ENCODE measurements at regions of chr19 and their contacts with region 1.

Region 1: GRCh38 chr19:10565567-10566407 is at the start of gene KRI1:
- DNase-seq: peak; percentile 100
- H3K4me3 Mint-ChIP-seq: peak within 1 kb of the TSS; percentile 99
- H3K27ac Mint-ChIP-seq: peak within 1 kb of the TSS; percentile 96
- H3K4me1 Mint-ChIP-seq: peaks cover 47% of the 10 kb centered on the region
- H3K27me3 Mint-ChIP-seq: peaks cover 3% of the 10 kb centered on the region
- total RNA-seq, gene KRI1: 84.0 and 90.6 TPM in 2 replicates

Region 2: DNA sequence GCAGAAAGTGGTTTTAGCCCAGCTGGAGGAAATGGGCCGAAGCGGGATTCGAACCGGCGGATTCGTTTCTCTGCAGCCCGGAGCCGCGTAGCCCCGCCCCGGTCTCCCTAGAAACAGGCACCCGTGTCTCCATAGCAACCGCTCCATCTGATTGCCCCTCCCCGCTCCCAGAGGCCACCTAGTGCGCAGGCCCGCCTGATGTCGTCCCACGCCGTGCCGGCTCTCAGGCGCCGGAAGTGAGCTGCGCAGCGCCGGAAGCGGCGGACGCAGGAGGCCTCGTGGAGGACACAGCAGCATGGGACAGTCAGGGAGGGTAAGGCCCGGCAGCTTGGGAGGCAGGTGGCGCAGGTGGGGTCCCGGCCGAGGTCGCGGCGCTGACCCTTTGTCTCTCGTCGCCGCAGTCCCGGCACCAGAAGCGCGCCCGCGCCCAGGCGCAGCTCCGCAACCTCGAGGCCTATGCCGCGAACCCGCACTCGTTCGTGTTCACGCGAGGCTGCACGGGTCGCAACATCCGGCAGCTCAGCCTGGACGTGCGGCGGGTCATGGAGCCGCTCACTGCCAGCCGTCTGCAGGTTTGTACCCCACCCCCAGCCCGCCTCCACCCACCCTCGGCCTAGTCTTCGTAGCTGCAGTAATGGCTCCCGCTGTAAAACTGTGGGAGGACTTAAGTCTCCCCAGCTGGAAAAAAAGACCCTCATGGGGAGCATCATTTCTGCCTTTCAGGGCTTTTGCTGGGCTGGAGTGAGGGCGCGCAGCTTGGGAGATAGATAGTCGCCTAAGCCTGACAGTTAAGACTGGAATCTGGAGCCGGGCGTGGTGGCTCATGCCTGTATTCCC is 459.5 kb before region 1 on chr19 and contains the start of gene PPAN:
- intact Hi-C with region 1: loop called (anchors 10 kb)
- DNase-seq: peak; percentile 99
- H3K4me3 Mint-ChIP-seq: peak within 1 kb of the TSS; percentile 85
- H3K27ac Mint-ChIP-seq: peak within 1 kb of the TSS; percentile 100
- H3K4me1 Mint-ChIP-seq: peaks cover 61% of the 10 kb centered on the region
- H3K27me3 Mint-ChIP-seq: peaks cover 1% of the 10 kb centered on the region
- total RNA-seq, gene PPAN: 222 and 232 TPM in 2 replicates

Region 3: DNA sequence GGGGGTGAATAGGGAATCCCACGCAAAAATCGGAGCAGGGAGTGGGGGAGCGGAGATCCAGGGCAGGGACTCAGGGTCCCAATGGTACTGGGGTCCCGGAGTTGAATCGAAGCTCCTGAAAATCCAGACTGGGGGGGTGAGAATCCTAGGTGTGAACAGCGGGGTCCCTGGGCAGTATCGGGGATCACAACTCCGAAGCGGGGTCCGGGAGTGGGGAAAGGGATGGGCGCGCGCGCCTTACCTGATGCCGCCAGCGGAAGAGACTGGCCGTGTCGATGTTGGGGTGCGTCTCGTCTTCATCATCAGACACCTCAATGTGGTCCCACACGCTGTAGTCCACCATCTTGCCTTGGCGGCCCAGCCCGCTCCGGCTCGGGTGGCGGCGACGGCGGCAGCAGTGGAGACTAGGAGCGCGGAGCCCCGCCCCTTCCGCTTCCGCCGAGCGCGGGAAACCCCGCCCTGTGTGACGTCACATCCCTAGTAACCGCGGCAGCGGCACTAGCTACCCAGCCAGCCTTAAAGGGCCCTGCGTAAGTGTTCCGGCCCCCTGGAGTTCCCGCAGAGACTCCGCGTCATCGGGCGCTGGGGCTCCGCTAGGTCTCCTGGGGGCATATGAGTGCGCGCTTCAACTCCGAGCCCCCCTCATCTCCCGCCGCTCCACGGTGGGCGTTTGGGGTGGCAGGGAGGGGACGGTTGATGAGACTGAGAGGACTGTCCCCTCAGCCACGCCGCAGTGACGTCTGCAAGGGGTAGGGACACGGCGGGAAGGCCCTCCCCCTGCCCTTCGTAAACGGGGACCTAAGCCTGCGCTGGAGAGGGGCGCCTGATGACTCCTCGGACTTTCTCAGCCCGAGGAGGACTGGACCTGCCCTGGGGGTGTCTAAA is 162.4 kb before region 1 on chr19 and contains the start of gene CDC37:
- intact Hi-C with region 1: loop called (anchors 5 kb)
- DNase-seq: peak; percentile 100
- H3K4me3 Mint-ChIP-seq: peak within 1 kb of the TSS; percentile 99
- H3K27ac Mint-ChIP-seq: peak within 1 kb of the TSS; percentile 98
- H3K4me1 Mint-ChIP-seq: peaks cover 58% of the 10 kb centered on the region
- H3K27me3 Mint-ChIP-seq: no peaks in the 10 kb centered on the region
- total RNA-seq, gene CDC37: 304 and 310 TPM in 2 replicates

Region 4: GRCh38 chr19:10543420-10544241 is 22.2 kb before region 1 on chr19 and contains the start of gene ATG4D:
- intact Hi-C with region 1: loop called (anchors 2 kb)
- DNase-seq: peak; percentile 93
- H3K4me3 Mint-ChIP-seq: peak within 1 kb of the TSS; percentile 90
- H3K27ac Mint-ChIP-seq: peak within 1 kb of the TSS; percentile 84
- H3K4me1 Mint-ChIP-seq: peaks cover 13% of the 10 kb centered on the region
- H3K27me3 Mint-ChIP-seq: peaks cover 13% of the 10 kb centered on the region
- total RNA-seq, gene ATG4D: 36.7 and 40.8 TPM in 2 replicates

Region 5: DNA sequence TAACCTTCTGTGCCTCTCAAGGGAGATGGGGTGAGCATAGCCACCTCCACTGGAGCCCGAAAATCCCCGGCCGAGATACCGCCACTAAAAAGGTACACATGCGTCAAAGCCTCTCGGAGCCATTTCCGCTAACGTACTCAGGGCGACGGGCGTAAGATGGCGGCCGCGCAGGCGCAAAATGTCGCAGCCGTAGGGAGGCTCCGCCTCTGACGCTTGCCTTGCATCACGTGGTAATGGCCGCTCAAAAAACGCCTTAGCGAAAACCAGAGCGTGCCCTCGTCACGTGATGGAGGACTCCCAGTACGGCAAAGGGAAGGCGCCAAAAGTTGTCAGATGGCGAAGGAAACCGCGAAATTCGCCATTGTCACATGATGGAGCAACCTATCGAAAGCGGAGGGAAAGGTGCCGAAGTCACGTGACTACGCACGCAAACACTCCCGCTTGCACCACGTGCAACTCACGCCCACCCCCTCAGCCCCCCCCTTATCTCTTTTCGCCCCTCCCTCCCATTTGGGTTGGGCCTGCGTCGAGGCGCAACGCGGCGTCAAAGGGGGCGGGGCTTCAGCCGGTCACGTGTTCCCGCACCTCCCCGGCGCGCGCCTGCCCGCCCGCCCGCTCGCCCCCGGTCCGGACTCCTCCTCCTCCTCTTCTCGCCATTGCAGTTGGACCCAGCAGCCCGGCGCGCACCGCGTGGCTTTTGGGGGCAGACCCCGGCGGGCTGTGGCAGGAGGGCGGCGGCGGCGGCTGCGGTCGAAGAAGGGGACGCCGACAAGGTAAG is 88.1 kb after region 1 on chr19 and contains the start of gene ILF3:
- intact Hi-C with region 1: loop called (anchors 1 kb)
- DNase-seq: peak; percentile 100
- H3K4me3 Mint-ChIP-seq: peak within 1 kb of the TSS; percentile 99
- H3K27ac Mint-ChIP-seq: peak within 1 kb of the TSS; percentile 99
- H3K4me1 Mint-ChIP-seq: peaks cover 27% of the 10 kb centered on the region
- H3K27me3 Mint-ChIP-seq: peaks cover 2% of the 10 kb centered on the region
- total RNA-seq, gene ILF3: 588 TPM in 2 replicates

Region 6: DNA sequence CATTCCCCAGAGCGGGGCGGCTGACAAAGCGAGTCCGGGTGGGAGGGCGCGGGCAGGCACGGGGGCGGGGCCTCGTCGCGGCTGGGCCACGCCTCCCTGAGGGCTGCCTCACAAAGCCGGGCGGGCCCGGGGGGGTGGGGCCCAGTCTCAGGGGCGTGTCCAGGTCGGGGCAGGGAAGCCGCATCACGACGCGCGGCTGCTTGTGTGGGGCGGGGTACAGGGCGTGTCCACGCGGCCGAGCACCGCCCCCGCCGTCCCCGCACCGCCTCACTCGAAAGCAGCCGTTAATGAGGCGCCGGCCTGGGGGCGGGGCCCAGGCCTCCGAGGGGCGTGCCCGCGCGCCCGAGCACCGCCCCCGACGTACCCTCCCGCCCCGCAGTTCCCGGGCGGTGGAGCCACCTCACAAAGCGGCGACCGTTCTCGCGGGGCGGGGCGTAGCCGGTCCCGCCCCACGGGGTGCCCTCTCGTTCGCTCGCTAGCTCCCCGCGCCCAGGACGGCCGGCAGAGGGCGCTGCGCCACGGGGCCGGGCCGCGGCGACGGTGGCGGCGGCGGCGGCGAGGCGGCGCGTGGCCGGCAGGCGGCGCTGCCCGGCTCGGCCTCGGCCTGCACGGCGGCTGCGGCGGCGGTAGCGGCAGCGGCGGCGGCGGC is 305.3 kb after region 1 on chr19 and contains the start of gene CARM1:
- intact Hi-C with region 1: loop called (anchors 10 kb)
- DNase-seq: peak; percentile 100
- H3K4me3 Mint-ChIP-seq: peak within 1 kb of the TSS; percentile 93
- H3K27ac Mint-ChIP-seq: peak within 1 kb of the TSS; percentile 96
- H3K4me1 Mint-ChIP-seq: peaks cover 30% of the 10 kb centered on the region
- H3K27me3 Mint-ChIP-seq: no peaks in the 10 kb centered on the region
- total RNA-seq, gene CARM1: 92.4 and 93.7 TPM in 2 replicates

Measured in activated CD4-positive, alpha-beta T cell treated with anti-CD3 and anti-CD28 coated beads, Interleukin-2, amount 10 ng/mL, durations not matched to agents 24 days and 14 days (primary cell).